Activated CD4-positive, alpha-beta memory T cell treated with anti-CD3 and anti-CD28 coated beads for 36 hours (primary cell): ENCODE measurements at regions of chr1 and their contacts with region 1.

Region 1: GRCh38 chr1:19661721-19662228 is 2.9 kb upstream of the HTR6 start:
- DNase-seq: peak; percentile 45
- H3K4me3 Mint-ChIP-seq: no peak overlapping the region
- H3K27ac Mint-ChIP-seq: no peak overlapping the region
- H3K4me1 Mint-ChIP-seq: peaks cover 20% of the 10 kb centered on the region
- H3K27me3 Mint-ChIP-seq: peaks cover 17% of the 10 kb centered on the region

Region 2: DNA sequence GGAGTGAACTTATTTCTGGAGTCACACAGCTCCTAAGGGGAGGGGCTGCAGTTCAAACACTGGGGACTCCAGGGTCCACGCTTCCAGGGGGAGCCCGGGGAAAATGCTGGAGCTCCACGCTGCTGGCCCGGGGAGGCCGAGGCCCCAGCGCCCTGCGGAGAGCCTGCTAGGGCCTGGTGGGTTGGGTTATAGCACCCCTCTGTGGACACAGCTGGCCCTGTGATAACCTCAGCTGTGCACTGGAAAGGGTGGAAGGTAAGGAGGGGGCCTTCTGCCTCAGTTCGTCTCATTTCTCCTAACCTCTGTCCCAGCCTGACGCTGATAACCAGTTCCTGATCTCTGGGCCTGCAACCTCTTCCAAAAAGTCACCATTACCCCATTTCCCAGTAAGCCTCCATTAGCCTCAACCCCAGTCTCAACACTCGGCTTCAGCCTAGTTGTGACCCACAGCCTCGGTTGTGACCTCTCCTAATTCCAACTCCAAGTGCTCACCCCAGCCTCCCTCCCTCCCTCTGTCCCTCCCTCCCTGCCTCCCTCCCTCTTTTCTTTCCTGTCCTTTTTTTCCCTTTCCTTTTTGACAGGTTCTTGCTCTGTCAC is 10.5 kb before region 1 on chr1:
- CTCF ChIA-PET with region 1: interaction called, 23 read pairs
- POLR2A ChIA-PET with region 1: no interaction called
- intact Hi-C with region 1: no loop called
- DNase-seq: peak; percentile 71
- H3K4me3 Mint-ChIP-seq: no peak overlapping the region
- H3K27ac Mint-ChIP-seq: no peak overlapping the region
- H3K4me1 Mint-ChIP-seq: peaks cover 34% of the 10 kb centered on the region
- H3K27me3 Mint-ChIP-seq: no peaks in the 10 kb centered on the region

Region 3: DNA sequence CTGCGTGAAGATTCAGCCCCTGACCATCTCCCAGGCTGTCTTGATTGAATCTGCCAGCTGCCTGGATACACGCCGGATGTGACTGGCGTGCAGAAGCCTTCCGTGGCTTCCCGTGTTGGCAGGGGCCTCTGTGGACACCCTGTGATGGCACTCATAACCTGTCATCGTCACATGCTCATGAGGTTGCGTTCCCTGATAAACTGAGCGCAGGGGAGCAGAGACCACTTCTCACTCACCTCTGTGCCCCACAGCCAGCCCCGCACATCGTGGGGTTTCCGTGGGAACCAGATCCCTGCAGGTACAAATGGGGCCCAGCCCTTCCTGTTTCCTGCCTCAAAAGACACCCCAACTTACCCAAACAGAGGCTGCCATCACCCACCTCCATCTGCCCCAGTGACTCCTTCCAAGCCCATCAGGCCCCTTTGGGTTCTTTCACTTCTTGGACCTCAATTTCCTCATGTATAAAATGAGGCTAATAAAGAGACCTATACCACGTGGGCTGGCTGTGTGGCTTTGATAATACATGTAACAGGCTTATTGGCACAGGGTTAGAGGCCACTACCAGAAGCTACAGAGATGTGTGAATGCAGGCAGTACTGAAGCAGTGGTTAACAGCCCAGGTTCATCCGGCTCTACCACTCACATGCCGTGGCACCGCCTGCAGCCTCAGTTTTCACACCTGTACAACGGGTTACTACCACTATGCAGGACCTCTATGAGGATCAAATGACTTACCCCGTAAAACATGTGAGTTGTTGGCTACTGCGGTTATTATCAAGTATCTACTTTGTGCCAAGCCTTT is 26.5 kb after region 1 on chr1:
- CTCF ChIA-PET with region 1: interaction called, 10 read pairs
- POLR2A ChIA-PET with region 1: no interaction called
- intact Hi-C with region 1: no loop called
- DNase-seq: peak; percentile 51
- H3K4me3 Mint-ChIP-seq: no peak overlapping the region
- H3K27ac Mint-ChIP-seq: peak overlapping the region; percentile 67
- H3K4me1 Mint-ChIP-seq: peaks cover 28% of the 10 kb centered on the region
- H3K27me3 Mint-ChIP-seq: no peaks in the 10 kb centered on the region

Region 4: GRCh38 chr1:19715334-19716203 is 53.8 kb after region 1 on chr1:
- CTCF ChIA-PET with region 1: interaction called, 195 read pairs
- POLR2A ChIA-PET with region 1: no interaction called
- intact Hi-C with region 1: no loop called
- DNase-seq: peak; percentile 93
- H3K4me3 Mint-ChIP-seq: no peak overlapping the region
- H3K27ac Mint-ChIP-seq: no peak overlapping the region
- H3K4me1 Mint-ChIP-seq: peaks cover 28% of the 10 kb centered on the region
- H3K27me3 Mint-ChIP-seq: no peaks in the 10 kb centered on the region

Region 5: GRCh38 chr1:19882111-19883071 is 220.6 kb after region 1 on chr1 and contains the start of gene OTUD3:
- CTCF ChIA-PET with region 1: interaction called, 11 read pairs
- POLR2A ChIA-PET with region 1: no interaction called
- intact Hi-C with region 1: no loop called
- DNase-seq: peak; percentile 97
- H3K4me3 Mint-ChIP-seq: peak within 1 kb of the TSS; percentile 84
- H3K27ac Mint-ChIP-seq: peak within 1 kb of the TSS; percentile 14
- H3K4me1 Mint-ChIP-seq: peaks cover 37% of the 10 kb centered on the region
- H3K27me3 Mint-ChIP-seq: peaks cover 7% of the 10 kb centered on the region
- total RNA-seq, gene OTUD3: 6.9 to 8.4 TPM